ENCODE measurements at regions of chr14 and their contacts with region 1.

Region 1: DNA sequence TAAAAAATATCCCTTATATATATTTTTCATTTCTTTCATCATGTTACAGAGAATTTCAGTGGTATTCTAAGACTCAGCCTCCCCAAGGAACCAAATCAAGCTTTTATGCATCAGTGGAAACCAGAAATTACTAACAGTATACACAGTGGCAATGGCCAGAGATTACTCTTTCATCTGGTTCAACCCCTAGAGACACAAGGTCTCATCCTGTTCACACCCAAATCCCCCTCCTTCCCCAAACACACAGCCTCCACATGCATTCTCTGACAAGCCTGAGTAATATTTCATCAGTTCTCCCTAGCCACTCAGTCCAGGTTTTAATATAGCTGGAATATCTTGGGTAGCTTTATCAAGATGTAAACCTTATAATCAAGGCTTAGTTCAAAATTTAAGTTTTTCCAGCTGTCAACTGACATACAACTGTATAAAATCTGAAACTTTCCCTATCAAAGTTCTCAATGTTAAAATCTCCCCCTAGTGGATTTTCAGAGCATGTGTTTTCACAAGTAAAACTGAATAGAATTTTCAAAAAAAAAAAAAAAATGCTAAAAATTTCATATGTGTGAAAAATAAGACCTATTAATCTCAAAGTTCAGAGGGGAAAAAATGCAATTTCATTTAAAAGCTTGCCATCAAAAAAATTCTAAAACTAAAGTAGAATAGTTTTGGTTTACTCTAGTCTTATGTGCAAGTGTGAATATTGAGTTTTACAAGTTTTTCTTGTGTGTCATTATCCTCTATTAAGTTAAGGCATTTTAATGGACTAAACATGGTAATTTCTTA is 10.5 kb upstream of the SSTR1 start:
- DNase-seq: no peak
- H3K4me3 Mint-ChIP-seq: no peak overlapping the region
- H3K27ac Mint-ChIP-seq: no peak overlapping the region
- H3K4me1 Mint-ChIP-seq: no peaks in the 10 kb centered on the region
- H3K27me3 Mint-ChIP-seq: no peaks in the 10 kb centered on the region

Region 2: GRCh38 chr14:37903343-37904191 is 293.6 kb before region 1 on chr14:
- intact Hi-C with region 1: loop called (anchors 10 kb)
- DNase-seq: no peak
- H3K4me3 Mint-ChIP-seq: no peak overlapping the region
- H3K27ac Mint-ChIP-seq: no peak overlapping the region
- H3K4me1 Mint-ChIP-seq: peaks cover 3% of the 10 kb centered on the region
- H3K27me3 Mint-ChIP-seq: peaks cover 12% of the 10 kb centered on the region

Region 3: GRCh38 chr14:37932008-37932407 is 265.2 kb before region 1 on chr14:
- intact Hi-C with region 1: no loop called
- DNase-seq: no peak
- H3K4me3 Mint-ChIP-seq: no peak overlapping the region
- H3K27ac Mint-ChIP-seq: no peak overlapping the region
- H3K4me1 Mint-ChIP-seq: no peaks in the 10 kb centered on the region
- H3K27me3 Mint-ChIP-seq: no peaks in the 10 kb centered on the region

Region 4: GRCh38 chr14:37985826-37986470 is 211.2 kb before region 1 on chr14:
- intact Hi-C with region 1: loop called (anchors 5 kb)
- DNase-seq: peak; percentile 9
- H3K4me3 Mint-ChIP-seq: no peak overlapping the region
- H3K27ac Mint-ChIP-seq: no peak overlapping the region
- H3K4me1 Mint-ChIP-seq: no peaks in the 10 kb centered on the region
- H3K27me3 Mint-ChIP-seq: no peaks in the 10 kb centered on the region

Region 5: DNA sequence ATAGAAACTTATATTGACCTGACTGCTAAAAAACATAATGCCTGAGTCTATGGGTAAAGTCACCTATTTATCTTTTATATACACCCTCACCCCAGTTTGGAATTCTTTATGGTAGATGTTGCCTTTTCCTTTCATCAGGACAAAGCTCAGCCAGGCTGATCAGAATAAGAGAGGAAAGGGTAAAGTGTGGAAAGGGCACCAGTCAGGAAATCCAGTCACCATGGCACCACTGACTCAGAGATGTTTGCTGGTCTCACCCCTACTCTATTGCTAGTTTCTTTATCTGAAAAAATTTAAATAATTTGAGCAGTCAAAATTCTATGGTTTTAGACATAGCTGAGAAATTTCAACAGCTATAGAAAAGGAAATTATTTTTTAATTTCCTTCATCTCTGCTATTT is 38.7 kb before region 1 on chr14:
- intact Hi-C with region 1: no loop called
- DNase-seq: no peak
- H3K4me3 Mint-ChIP-seq: no peak overlapping the region
- H3K27ac Mint-ChIP-seq: no peak overlapping the region
- H3K4me1 Mint-ChIP-seq: no peaks in the 10 kb centered on the region
- H3K27me3 Mint-ChIP-seq: peaks cover 3% of the 10 kb centered on the region